Natural killer cell (primary cell): ENCODE measurements at regions of chr16 and their contacts with region 1.

Region 1: DNA sequence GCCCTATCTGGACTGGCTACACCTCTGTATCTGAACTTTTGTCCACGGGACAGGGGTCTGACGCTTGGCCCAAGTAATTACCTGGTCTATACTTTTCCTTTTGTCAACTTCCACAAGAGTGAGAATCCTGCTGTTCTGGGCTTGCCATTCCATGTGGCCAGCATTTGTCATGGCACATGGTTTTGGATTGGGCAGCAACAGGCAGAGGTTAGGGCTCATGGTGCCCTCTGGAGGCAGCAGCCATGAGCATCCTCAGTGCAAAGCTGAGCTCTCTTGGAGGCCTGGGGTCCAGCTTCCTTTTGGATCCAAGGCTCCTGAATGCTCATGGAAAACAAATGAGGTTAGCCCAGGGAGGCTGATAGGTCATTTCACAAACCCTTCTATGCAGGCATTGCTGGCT is 7.5 kb upstream of the EDC4 start:
- DNase-seq: peak in 1 of 2 donors; percentile 51
- ATAC-seq: peak in 1 of 3 donors; percentile 44
- H3K4me3 ChIP-seq: no peak overlapping the region
- H3K4me3 Mint-ChIP-seq: no peak overlapping the region
- H3K27ac ChIP-seq: no peak overlapping the region
- H3K27ac Mint-ChIP-seq: no peak overlapping the region
- H3K4me1 ChIP-seq: no peaks in the 10 kb centered on the region
- H3K4me1 Mint-ChIP-seq: peaks cover 11 to 13% of the 10 kb centered on the region in 2 donors
- H3K27me3 ChIP-seq: no peaks in the 10 kb centered on the region
- H3K27me3 Mint-ChIP-seq: no peaks in the 10 kb centered on the region
- CTCF ChIP-seq: no peak

Region 2: GRCh38 chr16:67816240-67817031 is 48.9 kb before region 1 on chr16:
- intact Hi-C with region 1: loop called (anchors 2 kb)
- DNase-seq: peak; percentile 91 to 94
- ATAC-seq: peak; percentile 99
- H3K4me3 ChIP-seq: no peak overlapping the region
- H3K4me3 Mint-ChIP-seq: no peak overlapping the region
- H3K27ac ChIP-seq: no peak overlapping the region
- H3K27ac Mint-ChIP-seq: peak overlapping the region; percentile 31 to 45
- H3K4me1 ChIP-seq: peaks cover 8% of the 10 kb centered on the region
- H3K4me1 Mint-ChIP-seq: peaks cover 0 to 7% of the 10 kb centered on the region in 2 donors
- H3K27me3 ChIP-seq: no peaks in the 10 kb centered on the region
- H3K27me3 Mint-ChIP-seq: no peaks in the 10 kb centered on the region
- CTCF ChIP-seq: peak; percentile 100